ENCODE measurements at regions of chr2 and their contacts with region 1.

Region 1: DNA sequence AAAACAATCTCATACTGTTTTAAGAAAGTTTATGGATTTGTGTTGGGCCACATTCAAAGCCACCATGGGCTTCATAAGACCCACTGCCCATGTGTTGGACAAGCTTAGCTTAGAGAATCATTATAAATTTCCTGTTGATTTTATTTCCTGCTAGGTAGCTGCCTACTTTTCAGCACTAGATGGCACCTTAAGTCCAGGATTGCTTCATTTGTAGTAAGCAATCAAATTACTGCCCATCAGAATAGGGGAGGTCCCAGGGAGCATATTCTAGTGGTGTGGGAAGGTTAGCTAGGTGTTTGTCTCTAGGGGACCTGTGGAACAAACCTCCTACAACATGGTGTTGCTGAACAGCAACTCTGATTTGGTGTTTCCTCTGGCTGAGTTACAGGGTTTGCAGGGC is 11.0 kb upstream of the DCDC2C start:
- DNase-seq: peak; percentile 5
- H3K4me3 Mint-ChIP-seq: no peak overlapping the region
- H3K27ac Mint-ChIP-seq: no peak overlapping the region
- H3K4me1 Mint-ChIP-seq: no peaks in the 10 kb centered on the region
- H3K27me3 Mint-ChIP-seq: peaks cover 27% of the 10 kb centered on the region
- CTCF ChIP-seq: peak; percentile 50

Region 2: DNA sequence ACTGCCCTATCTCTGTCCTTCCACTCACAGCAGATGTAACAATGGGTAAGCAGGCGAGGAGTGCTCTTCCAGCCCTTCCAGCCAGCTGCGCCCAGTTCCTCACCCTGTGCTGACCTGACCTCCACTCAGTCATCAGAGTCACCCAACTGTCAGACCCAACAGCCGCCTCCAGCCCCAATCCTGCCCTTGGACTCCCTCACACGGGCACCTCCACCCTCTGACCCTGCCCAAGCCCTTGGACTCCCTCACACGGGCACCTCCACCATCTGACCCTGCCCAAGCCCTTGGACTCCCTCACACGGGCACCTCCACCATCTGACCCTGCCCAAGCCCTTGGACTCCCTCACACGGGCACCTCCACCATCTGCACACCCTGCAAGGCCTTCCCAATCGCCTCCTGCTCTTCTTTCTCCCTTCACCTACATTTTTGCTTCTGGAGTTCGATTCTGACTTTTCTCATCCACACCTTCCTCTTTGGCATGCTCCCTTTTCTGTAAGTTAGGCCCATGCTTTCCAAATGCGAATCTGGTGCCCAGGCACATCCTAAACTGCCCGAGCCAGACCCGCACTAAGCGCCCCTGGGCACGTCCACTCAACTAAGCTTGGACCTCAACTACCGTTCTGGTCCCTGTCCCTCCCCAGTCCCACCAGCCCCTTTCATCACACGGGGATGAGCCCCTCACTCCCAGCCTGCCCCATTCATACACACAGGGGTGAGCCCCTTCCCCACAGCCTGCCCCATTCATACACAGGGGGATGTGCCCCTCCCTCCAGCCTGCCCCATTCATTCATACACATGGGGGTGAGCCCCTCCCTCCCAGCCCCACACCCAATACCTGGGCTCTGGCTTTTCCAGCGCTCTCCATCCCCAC is 330.6 kb before region 1 on chr2:
- CTCF ChIA-PET with region 1: no interaction called
- intact Hi-C with region 1: no loop called
- DNase-seq: no peak
- H3K4me3 Mint-ChIP-seq: no peak overlapping the region
- H3K27ac Mint-ChIP-seq: no peak overlapping the region
- H3K4me1 Mint-ChIP-seq: peaks cover 12% of the 10 kb centered on the region
- H3K27me3 Mint-ChIP-seq: no peaks in the 10 kb centered on the region
- CTCF ChIP-seq: no peak

Region 3: DNA sequence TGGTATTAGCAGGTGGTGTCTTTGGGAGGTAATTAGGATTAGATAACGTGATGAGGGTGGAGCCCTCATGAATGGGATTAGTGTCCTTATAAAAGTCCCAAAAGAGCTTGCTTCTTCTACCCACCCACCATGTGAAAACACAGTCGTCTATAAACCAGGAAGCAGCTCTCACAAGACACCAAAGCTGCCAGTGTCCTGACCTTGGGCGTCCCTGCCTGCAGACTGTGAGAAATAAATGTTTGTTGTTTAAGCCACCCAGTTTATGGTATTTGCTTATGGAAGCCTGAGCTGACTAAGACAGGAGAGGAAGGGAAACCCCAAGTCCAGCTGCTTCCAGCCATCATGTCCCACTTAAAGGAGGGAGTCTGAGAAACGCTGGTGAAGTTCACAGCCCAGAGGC is 186.6 kb before region 1 on chr2:
- CTCF ChIA-PET with region 1: no interaction called
- intact Hi-C with region 1: no loop called
- DNase-seq: no peak
- H3K4me3 Mint-ChIP-seq: no peak overlapping the region
- H3K27ac Mint-ChIP-seq: no peak overlapping the region
- H3K4me1 Mint-ChIP-seq: no peaks in the 10 kb centered on the region
- H3K27me3 Mint-ChIP-seq: no peaks in the 10 kb centered on the region
- CTCF ChIP-seq: no peak

Region 4: GRCh38 chr2:3780477-3781402 is 88.4 kb after region 1 on chr2:
- CTCF ChIA-PET with region 1: interaction called, 7 read pairs
- intact Hi-C with region 1: loop called (anchors 2 kb)
- DNase-seq: peak; percentile 58
- H3K4me3 Mint-ChIP-seq: no peak overlapping the region
- H3K27ac Mint-ChIP-seq: no peak overlapping the region
- H3K4me1 Mint-ChIP-seq: no peaks in the 10 kb centered on the region
- H3K27me3 Mint-ChIP-seq: peaks cover 35% of the 10 kb centered on the region
- CTCF ChIP-seq: no peak

Region 5: GRCh38 chr2:3827673-3828575 is 135.5 kb after region 1 on chr2:
- CTCF ChIA-PET with region 1: interaction called, 3 read pairs
- intact Hi-C with region 1: loop called (anchors 2 kb)
- DNase-seq: peak; percentile 47
- H3K4me3 Mint-ChIP-seq: no peak overlapping the region
- H3K27ac Mint-ChIP-seq: no peak overlapping the region
- H3K4me1 Mint-ChIP-seq: no peaks in the 10 kb centered on the region
- H3K27me3 Mint-ChIP-seq: peaks cover 8% of the 10 kb centered on the region
- CTCF ChIP-seq: no peak

Region 6: DNA sequence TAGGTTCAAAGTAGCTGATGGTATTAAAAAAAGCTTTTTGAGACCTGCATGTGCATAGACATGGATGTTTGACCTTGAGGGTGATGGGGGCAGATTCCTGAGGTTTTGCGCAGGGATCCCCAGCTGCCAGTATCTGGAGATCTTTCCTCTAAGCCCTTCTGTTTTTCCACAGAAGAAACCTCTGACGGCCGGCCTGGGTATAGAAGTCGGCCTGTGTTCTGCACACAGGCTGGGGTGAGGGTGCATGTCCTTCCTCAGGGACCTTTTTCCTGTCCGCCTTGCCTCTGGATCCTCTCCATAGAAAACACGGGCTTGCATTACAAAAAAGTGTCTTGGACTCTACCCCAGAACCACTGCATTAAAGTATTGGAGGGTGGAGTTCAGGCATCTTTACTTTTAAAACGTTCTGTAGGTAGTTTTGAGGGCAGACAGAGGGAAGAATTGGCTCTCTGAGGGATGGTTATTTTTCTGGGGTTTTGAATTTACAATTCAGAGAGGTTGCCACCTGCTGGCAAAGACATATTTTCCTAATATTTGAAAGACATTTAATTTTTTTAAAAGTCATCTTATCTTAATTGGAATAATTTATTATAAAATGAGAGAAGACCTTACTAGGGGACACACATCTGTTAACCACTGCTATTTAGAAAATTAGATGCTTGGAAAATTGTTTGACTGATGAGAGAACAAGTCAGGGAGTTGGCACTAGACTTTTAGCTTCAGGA is 361.6 kb after region 1 on chr2:
- CTCF ChIA-PET with region 1: no interaction called
- intact Hi-C with region 1: loop called (anchors 10 kb)
- DNase-seq: no peak
- H3K4me3 Mint-ChIP-seq: no peak overlapping the region
- H3K27ac Mint-ChIP-seq: no peak overlapping the region
- H3K4me1 Mint-ChIP-seq: no peaks in the 10 kb centered on the region
- H3K27me3 Mint-ChIP-seq: no peaks in the 10 kb centered on the region
- CTCF ChIP-seq: no peak